ENCODE measurements at regions of chr10 and their contacts with region 1.

Region 1: DNA sequence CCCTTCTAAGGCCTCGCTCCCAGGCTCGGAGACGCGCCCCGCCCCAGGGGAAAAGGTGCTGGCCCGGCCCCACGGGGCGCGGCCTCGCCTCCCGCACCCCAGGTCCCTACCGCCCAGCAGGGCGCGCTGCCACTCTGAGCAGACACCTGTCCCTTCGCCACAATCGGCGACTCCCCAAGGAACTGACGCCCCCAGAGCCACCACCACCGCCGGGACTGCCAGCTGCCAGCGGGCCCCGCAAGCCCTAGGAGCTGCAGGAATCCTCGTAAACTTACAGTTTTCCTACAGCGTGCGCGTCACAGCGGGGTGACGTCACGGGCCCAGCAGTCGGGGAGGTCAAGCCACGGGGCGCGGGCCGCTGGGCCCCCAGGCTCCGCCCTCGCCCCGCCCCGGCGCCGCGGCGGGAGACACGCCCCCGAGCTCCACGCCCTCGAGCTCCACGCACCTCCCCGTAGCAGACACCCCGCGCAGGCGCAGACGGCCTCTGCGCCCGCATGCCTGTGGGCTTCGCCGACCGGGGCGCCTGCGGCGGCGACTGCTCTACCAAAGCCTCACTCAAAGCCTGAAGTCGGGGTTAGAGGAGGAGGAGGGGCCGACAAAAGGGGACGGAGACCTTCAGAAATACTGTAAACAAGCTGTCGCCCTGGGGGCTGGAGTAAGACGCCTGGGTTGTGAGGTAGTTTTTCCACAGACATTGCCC is at the start of gene ZNF438:
- DNase-seq: peak; percentile 99
- total RNA-seq, gene ZNF438: 12.5 TPM

Region 2: GRCh38 chr10:30812018-30812851 is 219.5 kb before region 1 on chr10:
- intact Hi-C with region 1: loop called (anchors 5 kb)
- DNase-seq: no peak

Region 3: GRCh38 chr10:30970760-30971460 is 60.8 kb before region 1 on chr10:
- intact Hi-C with region 1: loop called (anchors 5 kb)
- DNase-seq: no peak

Region 4: DNA sequence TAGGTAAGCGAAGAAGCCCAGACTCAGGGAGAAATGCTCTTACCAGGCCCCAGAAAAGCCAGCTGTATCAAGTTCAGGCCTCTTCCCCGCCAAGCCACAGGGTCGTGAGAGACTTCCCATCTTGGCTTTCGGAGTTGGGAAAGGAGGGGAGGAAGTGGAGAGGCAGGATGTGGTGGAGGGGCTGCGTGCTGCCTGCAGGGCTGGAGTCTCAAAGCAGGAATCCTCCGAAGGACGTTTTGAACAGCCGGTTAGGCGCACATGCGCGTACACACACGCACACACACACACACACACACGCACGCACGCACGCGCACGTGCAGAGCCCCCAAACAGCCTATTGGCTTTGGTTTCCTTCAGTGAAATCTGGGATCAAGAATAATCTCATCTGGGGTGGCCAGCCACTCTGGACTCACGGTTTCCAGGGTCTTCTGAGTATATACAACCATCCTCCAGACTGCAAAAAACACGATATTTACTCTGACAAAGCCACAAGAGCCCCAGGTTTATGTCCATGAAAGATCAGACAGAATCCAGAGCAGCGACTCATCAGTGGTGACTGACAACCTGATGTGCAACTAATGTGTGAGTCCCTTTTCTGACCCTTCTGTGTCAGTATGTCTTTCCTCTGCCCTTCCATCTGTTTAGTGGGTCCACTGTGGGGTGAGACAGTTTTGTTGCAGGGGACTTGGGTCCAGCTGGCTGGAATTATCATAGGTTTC is 114.9 kb after region 1 on chr10:
- intact Hi-C with region 1: loop called (anchors 5 kb)
- DNase-seq: peak; percentile 86

Region 5: DNA sequence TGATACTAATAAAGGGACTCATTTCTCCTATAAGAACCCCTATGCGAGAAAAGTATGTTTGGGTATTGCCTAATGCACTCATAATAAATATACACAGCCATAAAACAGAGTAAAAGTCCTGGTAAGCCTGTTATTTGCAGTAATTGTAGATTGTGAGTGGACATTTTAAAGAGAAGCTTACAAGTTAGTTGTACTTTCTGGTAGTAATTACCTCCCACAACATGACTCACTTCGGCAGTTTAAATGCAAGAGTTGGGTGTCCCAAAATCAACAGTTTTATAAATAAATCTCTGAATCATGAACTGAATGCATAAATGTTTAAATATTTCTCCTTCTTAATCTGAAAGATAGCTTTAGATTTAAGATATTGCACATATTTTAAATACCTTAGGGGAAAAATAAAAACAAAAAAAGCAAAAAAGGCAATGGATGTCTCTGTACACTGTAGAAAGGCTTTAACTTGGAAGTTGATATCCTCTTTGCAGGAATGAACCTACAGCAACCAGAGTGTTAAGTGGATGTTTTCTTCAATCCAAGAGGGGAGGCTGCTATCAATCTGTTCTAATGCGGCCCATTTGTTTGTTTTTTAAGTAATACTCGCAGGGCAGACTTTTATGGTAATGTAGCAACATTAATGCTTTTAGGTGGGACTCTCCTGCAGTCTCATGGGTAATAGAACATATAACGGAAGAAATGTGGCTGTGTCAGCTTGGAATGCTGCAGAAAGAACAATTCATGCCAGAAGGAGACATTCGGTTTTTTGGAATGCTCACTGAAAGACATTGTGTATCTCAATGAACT is 230.0 kb after region 1 on chr10:
- intact Hi-C with region 1: no loop called
- DNase-seq: no peak

Measured in cardiac septum (tissue), 1 donor.